ENCODE measurements at regions of chr7 and their contacts with region 1.

Region 1: GRCh38 chr7:64294701-64295420 is 18.9 kb upstream of the ZNF736 start:
- DNase-seq: no peak
- H3K4me3 Mint-ChIP-seq: no peak overlapping the region
- H3K27ac Mint-ChIP-seq: no peak overlapping the region
- H3K4me1 Mint-ChIP-seq: no peaks in the 10 kb centered on the region
- H3K27me3 Mint-ChIP-seq: no peaks in the 10 kb centered on the region

Region 2: GRCh38 chr7:64180989-64181388 is 113.9 kb before region 1 on chr7:
- intact Hi-C with region 1: no loop called
- DNase-seq: no peak
- H3K4me3 Mint-ChIP-seq: no peak overlapping the region
- H3K27ac Mint-ChIP-seq: no peak overlapping the region
- H3K4me1 Mint-ChIP-seq: no peaks in the 10 kb centered on the region
- H3K27me3 Mint-ChIP-seq: no peaks in the 10 kb centered on the region

Region 3: GRCh38 chr7:64371106-64371505 is 76.2 kb after region 1 on chr7:
- intact Hi-C with region 1: no loop called
- DNase-seq: no peak
- H3K4me3 Mint-ChIP-seq: no peak overlapping the region
- H3K27ac Mint-ChIP-seq: no peak overlapping the region
- H3K4me1 Mint-ChIP-seq: no peaks in the 10 kb centered on the region
- H3K27me3 Mint-ChIP-seq: no peaks in the 10 kb centered on the region

Region 4: GRCh38 chr7:64407148-64407547 is 112.3 kb after region 1 on chr7:
- intact Hi-C with region 1: no loop called
- DNase-seq: no peak
- H3K4me3 Mint-ChIP-seq: no peak overlapping the region
- H3K27ac Mint-ChIP-seq: no peak overlapping the region
- H3K4me1 Mint-ChIP-seq: no peaks in the 10 kb centered on the region
- H3K27me3 Mint-ChIP-seq: no peaks in the 10 kb centered on the region

Region 5: DNA sequence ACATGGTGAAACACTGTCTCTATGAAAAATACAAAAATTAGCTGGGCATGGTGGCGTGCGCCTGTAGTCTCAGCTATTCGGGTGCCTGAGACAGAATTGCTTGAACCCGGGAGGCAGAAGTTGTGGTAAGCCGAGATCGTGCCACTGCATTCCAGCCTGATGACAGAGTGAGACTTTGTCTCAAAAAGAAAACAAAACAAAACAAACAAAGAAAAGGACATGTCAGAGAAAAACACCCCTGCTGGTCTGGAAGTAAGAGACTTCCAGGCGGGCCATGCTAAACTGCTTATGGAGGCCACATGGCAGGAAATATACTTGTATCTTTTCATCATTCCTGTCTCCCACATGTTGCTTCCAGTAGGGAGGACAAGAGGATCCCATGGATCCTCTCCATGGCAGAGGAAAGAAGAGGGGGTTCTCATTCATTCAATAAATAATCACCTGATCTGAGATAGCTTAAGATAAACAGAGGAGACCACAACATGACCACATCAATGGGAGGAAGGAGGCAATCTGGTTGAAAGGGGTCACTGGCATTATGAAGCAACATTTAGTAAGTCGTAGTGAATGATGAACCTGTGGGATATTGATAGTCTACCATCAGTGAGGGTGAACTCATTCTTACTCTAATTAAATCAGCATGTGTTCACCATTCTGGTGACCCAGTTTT is 438.8 kb after region 1 on chr7:
- intact Hi-C with region 1: no loop called
- DNase-seq: no peak
- H3K4me3 Mint-ChIP-seq: no peak overlapping the region
- H3K27ac Mint-ChIP-seq: no peak overlapping the region
- H3K4me1 Mint-ChIP-seq: no peaks in the 10 kb centered on the region
- H3K27me3 Mint-ChIP-seq: no peaks in the 10 kb centered on the region

Region 6: DNA sequence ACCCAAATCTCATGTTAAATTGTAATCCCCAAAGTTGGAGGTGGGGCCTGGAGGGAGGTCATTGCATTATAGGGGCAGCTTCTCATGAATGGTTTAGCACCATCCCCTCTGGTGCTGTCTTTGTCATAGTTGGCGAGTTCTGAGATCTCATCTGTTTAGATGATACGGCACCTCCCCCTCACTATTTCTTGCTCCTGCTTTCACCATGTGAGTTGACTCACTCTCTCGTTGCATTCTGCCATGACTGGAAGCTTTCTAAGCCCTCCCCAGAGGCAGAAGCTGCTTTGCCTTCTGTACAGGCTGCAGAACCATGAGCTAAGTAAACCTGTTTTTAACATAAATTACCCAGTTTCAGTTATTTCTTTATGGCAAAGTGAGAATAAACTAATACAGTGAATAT is 480.4 kb after region 1 on chr7:
- intact Hi-C with region 1: loop called (anchors 5 kb)
- DNase-seq: no peak
- H3K4me3 Mint-ChIP-seq: no peak overlapping the region
- H3K27ac Mint-ChIP-seq: no peak overlapping the region
- H3K4me1 Mint-ChIP-seq: no peaks in the 10 kb centered on the region
- H3K27me3 Mint-ChIP-seq: no peaks in the 10 kb centered on the region

Measured in activated T-helper 2 cell treated with anti-CD3 and anti-CD28 coated beads, Interferon-gamma antibody, Interleukin-2, Interleukin-4, amounts not matched to agents 10 μg/mL and 5 μg/mL and 100 μg/mL, durations not matched to agents 14 hours and 24 hours and 36 hours (primary cell).